ENCODE measurements at regions of chr19 and their contacts with region 1.

Region 1: GRCh38 chr19:2475702-2476450 is at the start of gene GADD45B:
- DNase-seq: peak; percentile 98
- H3K4me3 Mint-ChIP-seq: peak within 1 kb of the TSS; percentile 98
- H3K27ac Mint-ChIP-seq: peak within 1 kb of the TSS; percentile 89
- H3K4me1 Mint-ChIP-seq: peaks cover 9% of the 10 kb centered on the region
- H3K27me3 Mint-ChIP-seq: no peaks in the 10 kb centered on the region
- CTCF ChIP-seq: no peak
- total RNA-seq, gene GADD45B: 28.0 and 53.8 TPM in 2 replicates

Region 2: DNA sequence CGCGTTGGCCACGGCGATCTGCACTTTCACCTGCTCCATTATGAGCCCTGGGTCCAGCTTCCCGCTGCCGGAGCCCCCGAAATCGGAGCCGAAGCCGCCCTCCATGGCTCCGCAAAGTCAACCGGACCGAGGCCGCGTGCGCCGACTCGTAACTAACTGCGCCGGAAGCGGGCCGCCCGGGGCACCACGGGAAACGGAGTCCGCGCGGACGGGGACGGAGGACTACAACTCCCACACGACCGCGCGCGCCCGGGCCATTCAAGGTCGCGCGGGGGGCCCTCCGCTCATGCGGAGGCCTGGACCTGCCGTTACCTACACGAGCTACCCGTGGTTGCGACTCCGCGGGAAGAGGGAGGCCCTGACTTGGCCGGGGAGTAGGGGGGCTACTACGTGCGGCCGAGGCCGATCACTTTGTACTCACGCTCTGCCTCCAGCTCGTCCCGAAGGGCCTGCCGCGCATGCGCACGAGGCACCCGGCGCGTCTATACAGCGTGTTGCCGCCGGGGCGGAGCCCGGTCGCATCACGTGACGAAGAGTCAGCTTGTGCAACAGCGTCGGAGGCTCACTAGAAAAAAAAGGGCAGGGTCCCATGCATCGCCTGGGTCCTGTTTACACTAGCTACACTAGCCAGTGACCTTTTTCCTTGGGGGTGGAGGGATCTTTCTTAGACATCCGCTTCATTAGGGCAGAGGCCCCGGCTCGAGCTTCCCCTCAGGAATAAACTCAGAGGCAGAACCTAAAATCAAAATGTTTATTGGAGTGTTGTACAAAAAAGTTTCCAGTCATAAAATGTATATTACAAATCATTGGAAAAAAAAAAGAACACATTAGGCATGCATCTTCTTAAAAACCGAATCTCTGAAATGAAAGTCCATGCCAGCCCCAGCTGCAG is 48.2 kb before region 1 on chr19 and contains the start of gene TIMM13:
- CTCF ChIA-PET with region 1: no interaction called
- POLR2A ChIA-PET with region 1: interaction called, 15 read pairs
- intact Hi-C with region 1: no loop called
- DNase-seq: peak; percentile 97
- H3K4me3 Mint-ChIP-seq: peak within 1 kb of the TSS; percentile 93
- H3K27ac Mint-ChIP-seq: peak within 1 kb of the TSS; percentile 99
- H3K4me1 Mint-ChIP-seq: no peaks in the 10 kb centered on the region
- H3K27me3 Mint-ChIP-seq: no peaks in the 10 kb centered on the region
- CTCF ChIP-seq: no peak
- total RNA-seq, gene TIMM13: 123 and 188 TPM in 2 replicates

Region 3: GRCh38 chr19:2494444-2495129 is 18.7 kb after region 1 on chr19:
- CTCF ChIA-PET with region 1: interaction called, 4 read pairs
- POLR2A ChIA-PET with region 1: interaction called, 131 read pairs
- intact Hi-C with region 1: no loop called
- DNase-seq: peak; percentile 45
- H3K4me3 Mint-ChIP-seq: peak overlapping the region; percentile 66
- H3K27ac Mint-ChIP-seq: no peak overlapping the region
- H3K4me1 Mint-ChIP-seq: peaks cover 33% of the 10 kb centered on the region
- H3K27me3 Mint-ChIP-seq: no peaks in the 10 kb centered on the region
- CTCF ChIP-seq: no peak

Region 4: GRCh38 chr19:2543463-2544442 is 67.9 kb after region 1 on chr19:
- CTCF ChIA-PET with region 1: interaction called, 62 read pairs
- POLR2A ChIA-PET with region 1: interaction called, 190 read pairs
- intact Hi-C with region 1: loop called (anchors 1 kb)
- DNase-seq: peak; percentile 97
- H3K4me3 Mint-ChIP-seq: peak overlapping the region; percentile 61
- H3K27ac Mint-ChIP-seq: peak overlapping the region; percentile 85
- H3K4me1 Mint-ChIP-seq: peaks cover 21% of the 10 kb centered on the region
- H3K27me3 Mint-ChIP-seq: no peaks in the 10 kb centered on the region
- CTCF ChIP-seq: peak; percentile 36

Region 5: DNA sequence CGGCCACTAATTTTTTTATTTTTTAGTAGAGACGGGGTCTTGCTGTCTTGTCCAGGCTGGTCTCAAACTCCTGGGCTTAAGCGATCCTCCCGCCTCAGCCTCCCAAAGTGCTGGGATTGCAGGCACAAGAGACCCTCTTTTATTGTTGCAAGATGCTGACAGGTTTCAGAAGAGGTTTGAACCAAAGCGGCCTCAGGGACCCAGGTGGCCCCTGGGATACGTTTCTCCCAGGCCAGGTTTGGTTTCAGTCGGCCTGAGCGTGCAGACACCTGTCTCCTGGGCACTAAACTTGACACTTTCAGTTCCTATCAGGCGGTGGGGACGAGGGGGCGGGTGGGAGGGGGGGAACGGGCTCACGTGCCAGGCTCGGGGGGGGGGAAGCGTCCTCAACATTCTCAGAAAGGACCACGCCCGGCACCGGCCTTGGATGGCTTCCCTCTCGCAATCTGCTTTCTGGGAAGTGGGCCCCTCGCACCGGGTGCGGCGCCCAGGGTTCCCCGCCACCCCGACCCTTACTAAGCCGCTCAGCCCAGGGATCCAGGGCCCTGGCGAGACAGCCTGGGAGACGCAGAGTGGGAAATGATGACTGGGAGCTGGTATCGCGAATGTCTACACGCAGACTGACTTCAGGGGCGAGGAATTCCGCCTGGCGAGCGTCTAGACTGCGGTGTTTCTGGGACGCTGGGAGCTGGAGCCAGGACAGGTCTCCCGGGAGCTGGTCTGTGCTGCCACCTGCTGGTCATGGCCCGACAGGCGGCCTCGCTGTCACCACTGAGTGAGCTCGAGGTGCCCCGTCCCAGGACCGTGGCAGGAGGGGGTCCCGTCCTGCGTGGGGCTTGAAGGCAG is 135.0 kb after region 1 on chr19:
- CTCF ChIA-PET with region 1: interaction called, 45 read pairs
- POLR2A ChIA-PET with region 1: interaction called, 104 read pairs
- intact Hi-C with region 1: loop called (anchors 1 kb)
- DNase-seq: peak; percentile 90
- H3K4me3 Mint-ChIP-seq: peak overlapping the region; percentile 64
- H3K27ac Mint-ChIP-seq: no peak overlapping the region
- H3K4me1 Mint-ChIP-seq: no peaks in the 10 kb centered on the region
- H3K27me3 Mint-ChIP-seq: peaks cover 11% of the 10 kb centered on the region
- CTCF ChIP-seq: peak; percentile 96

Region 6: DNA sequence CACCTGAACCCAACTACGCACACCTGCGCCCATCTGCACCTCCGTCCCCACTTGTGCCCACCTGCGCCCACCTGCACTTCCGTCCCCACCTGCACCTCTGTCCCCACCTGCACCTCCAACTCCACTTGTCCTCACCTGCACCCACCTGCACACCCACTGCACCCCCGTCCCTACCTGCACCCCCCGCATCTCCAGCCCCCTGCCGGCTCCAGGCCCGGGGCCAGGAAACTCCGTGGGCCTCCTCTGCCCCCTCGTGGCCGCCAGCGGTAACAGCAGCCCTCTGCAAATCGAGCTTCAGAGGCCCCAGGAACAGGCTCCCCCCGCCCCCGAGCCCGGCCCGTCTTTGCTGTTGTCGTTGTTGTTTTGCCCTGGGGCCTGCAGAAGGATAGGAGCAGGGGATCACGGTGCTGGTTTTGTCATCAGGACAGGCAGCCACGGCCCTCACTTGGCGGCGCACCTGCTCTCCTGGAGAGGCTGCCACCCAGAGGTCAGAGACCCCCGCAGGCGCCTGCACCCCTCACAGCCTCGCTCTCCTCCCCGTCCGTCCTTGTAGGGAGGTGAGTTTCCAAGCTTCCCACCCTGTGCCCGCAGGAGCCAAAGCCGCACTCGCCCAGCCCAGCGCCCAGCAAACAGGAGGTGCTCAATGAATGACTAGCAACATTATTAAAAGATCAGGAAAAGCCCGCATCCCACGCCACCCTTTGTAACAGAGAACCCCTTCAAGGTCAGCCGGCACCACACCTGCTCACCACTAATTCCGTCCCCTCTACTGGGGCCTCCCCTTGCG is 161.2 kb after region 1 on chr19:
- CTCF ChIA-PET with region 1: interaction called, 4 read pairs
- POLR2A ChIA-PET with region 1: interaction called, 14 read pairs
- intact Hi-C with region 1: no loop called
- DNase-seq: peak; percentile 39
- H3K4me3 Mint-ChIP-seq: peak overlapping the region; percentile 28
- H3K27ac Mint-ChIP-seq: no peak overlapping the region
- H3K4me1 Mint-ChIP-seq: peaks cover 5% of the 10 kb centered on the region
- H3K27me3 Mint-ChIP-seq: no peaks in the 10 kb centered on the region
- CTCF ChIP-seq: peak; percentile 90

Measured in MCF 10A (cell line).